H1 (cell line): ENCODE measurements at regions of chr2 and their contacts with region 1.

Region 1: DNA sequence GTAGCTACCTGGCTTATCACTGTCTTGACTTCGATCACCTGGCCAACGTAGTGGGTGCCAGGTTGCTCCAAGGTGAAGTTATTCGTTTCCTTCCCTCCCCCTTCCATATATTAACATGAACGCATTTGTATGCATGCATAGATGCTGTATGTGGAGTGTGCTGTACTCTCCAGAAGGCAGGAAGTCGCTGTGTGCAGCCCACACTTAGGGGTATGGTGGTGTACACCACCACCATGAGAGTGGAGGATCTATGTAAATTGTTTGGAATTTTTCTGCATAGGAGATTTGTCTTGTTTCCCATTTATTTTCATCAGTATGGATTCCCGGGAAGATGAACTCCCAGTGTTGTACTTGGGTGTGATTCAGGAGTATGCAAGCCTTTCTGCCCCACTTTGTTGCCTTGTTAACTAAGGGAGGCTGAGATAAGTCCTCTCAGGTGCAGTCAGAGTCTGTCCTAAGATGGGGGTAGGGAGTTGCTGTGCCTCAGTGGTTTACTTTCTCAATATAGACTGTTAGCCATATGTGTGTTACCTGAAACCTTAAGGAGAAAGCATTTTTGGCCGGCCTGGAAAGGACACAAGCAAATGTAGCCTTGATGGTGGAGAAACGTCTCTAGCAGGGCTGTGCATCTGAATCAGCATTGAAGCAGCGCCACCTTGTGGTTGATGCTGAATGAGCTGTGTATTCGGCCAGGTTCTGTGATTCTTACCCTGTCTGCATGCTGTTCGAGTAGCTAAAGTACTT is 149.8 kb downstream of the TANC1 start:
- DNase-seq: peak; percentile 59 to 93
- H3K4me3 ChIP-seq: no peak overlapping the region
- H3K27ac ChIP-seq: no peak overlapping the region
- H3K4me1 ChIP-seq: no peaks in the 10 kb centered on the region
- H3K27me3 ChIP-seq: no peaks in the 10 kb centered on the region
- CTCF ChIP-seq: peak; percentile 84 to 97 (median 92)
- EP300 ChIP-seq: no peak
- POLR2A ChIP-seq: no peak
- RAD21 ChIP-seq: peak; percentile 96 to 97

Region 2: DNA sequence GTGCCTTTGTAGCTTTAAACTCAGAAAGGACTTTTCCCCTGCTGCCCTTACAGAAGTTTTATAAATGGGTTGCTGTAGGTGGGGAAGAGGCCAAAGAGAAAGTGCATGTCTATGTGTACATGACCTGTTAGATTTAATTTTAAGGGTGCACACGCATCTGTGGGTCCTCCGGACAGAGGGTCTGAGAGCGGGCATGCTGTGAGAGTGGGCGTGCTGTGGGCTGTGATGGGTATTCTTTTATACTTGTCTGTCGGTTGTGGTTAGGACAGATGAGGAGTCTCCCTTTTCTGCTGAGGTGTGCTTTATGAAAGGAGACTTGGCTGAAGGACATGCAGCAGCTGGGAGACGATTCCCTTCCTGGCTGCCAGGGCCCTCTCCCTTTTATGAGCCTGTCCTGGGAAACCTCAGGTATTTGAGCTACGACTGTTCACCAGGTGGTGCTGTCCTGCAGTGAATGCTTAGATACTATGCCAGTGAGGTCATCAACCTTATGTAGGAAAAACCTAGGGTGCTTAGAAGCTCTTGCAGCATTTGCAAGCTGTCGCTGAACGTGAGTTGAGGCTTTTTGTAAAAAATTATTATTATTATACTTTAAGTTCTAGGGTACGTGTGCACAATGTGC is 82.4 kb before region 1 on chr2:
- CTCF ChIA-PET with region 1: interaction called, 79 read pairs
- POLR2A ChIA-PET with region 1: no interaction called
- DNase-seq: peak in 1 of 2 experiments; percentile 58
- H3K4me3 ChIP-seq: no peak overlapping the region
- H3K27ac ChIP-seq: no peak overlapping the region
- H3K4me1 ChIP-seq: peaks cover 2 to 10% (median 5%) of the 10 kb centered on the region in 4 experiments
- H3K27me3 ChIP-seq: no peaks in the 10 kb centered on the region
- CTCF ChIP-seq: peak; percentile 39 to 81 (median 67)
- EP300 ChIP-seq: 0 out of 3 replicates have a peak, but pooled peaks of 1 of the 2 experiments have one; percentile 37
- POLR2A ChIP-seq: no peak
- RAD21 ChIP-seq: peak; percentile 84 to 91

Region 3: DNA sequence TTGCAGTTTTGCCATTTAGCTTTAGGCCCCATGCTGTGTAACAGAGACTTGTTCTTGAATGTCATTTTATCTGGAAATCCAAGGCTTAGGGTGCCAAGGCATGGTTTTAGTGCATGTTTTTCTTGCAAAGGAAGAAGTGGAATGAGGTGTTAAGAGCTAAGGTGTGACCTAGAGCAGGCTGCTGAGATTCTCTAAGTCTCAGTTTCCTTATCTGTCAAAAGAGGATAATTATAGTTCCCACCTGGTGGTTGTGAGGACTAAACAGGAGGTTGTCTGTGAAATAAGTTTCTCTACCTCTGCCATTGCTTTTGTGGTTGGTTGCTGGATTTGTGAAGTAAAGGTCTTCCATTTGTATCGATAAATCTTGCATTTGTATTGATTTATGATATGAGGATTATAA is 67.9 kb before region 1 on chr2:
- CTCF ChIA-PET with region 1: no interaction called
- POLR2A ChIA-PET with region 1: no interaction called
- DNase-seq: no peak
- H3K4me3 ChIP-seq: no peak overlapping the region
- H3K27ac ChIP-seq: no peak overlapping the region
- H3K4me1 ChIP-seq: peaks cover 0 to 7% (median 2%) of the 10 kb centered on the region in 4 experiments; a peak in 2 of 7 replicates
- H3K27me3 ChIP-seq: no peaks in the 10 kb centered on the region
- CTCF ChIP-seq: no peak
- EP300 ChIP-seq: no peak
- POLR2A ChIP-seq: no peak
- RAD21 ChIP-seq: no peak

Region 4: DNA sequence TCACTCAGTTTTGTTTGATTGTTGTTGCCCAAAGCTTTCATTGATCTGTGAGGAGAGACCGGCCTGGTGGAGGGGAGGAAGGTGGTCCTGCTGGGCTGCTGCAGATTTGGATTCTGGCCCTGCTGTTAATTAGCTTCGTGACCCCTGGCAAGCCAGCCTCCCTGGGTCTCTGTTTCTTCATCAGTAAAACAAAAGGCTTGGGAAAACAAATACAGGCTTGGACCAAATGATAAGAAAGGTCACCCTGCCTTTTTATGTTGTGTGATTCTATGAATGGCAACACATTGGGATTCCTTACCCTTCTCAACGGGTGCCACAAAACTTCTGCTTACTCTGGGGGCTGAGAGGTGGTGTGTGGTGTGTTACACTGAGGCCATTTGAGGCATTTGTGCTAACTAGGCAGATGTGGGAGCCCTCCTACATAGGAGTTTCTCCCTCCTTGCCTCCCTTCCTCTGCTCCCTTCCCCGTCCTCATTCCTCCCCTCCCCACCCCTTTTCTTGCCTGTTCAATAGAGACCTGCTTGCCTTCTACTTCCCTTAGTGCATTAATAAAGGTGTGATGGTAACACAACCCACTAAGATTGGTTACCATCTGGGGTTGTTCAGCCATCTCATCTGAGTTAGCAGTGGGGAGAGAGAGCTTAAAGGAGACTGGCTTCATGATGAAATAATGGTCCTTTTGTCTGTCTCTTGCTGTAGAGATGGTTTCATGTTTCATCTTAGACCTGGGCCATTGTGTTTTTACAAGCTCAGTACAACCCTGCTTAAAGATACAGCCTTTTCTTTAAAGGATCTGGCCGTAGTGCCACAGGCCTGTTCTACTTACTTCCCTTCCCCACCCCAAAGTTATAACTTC is 53.6 kb before region 1 on chr2:
- CTCF ChIA-PET with region 1: interaction called, 17 read pairs
- POLR2A ChIA-PET with region 1: no interaction called
- DNase-seq: no peak
- H3K4me3 ChIP-seq: peak overlapping the region in 3 of 4 experiments; percentile 5 to 34 (median 12); a peak in 3 of 8 replicates
- H3K27ac ChIP-seq: no peak overlapping the region
- H3K4me1 ChIP-seq: peaks cover 8 to 13% (median 11%) of the 10 kb centered on the region in 4 experiments; a peak in 6 of 7 replicates
- H3K27me3 ChIP-seq: no peaks in the 10 kb centered on the region; a peak in 2 of 7 replicates
- CTCF ChIP-seq: no peak
- EP300 ChIP-seq: no peak
- POLR2A ChIP-seq: no peak
- RAD21 ChIP-seq: no peak

Region 5: GRCh38 chr2:159090514-159091201 is 27.6 kb before region 1 on chr2:
- CTCF ChIA-PET with region 1: interaction called, 16 read pairs
- POLR2A ChIA-PET with region 1: no interaction called
- DNase-seq: no peak
- H3K4me3 ChIP-seq: no peak overlapping the region
- H3K27ac ChIP-seq: no peak overlapping the region
- H3K4me1 ChIP-seq: peaks cover 0 to 6% (median 0%) of the 10 kb centered on the region in 4 experiments; a peak in 1 of 7 replicates
- H3K27me3 ChIP-seq: no peaks in the 10 kb centered on the region
- CTCF ChIP-seq: no peak
- EP300 ChIP-seq: no peak
- POLR2A ChIP-seq: no peak
- RAD21 ChIP-seq: no peak

Region 6: DNA sequence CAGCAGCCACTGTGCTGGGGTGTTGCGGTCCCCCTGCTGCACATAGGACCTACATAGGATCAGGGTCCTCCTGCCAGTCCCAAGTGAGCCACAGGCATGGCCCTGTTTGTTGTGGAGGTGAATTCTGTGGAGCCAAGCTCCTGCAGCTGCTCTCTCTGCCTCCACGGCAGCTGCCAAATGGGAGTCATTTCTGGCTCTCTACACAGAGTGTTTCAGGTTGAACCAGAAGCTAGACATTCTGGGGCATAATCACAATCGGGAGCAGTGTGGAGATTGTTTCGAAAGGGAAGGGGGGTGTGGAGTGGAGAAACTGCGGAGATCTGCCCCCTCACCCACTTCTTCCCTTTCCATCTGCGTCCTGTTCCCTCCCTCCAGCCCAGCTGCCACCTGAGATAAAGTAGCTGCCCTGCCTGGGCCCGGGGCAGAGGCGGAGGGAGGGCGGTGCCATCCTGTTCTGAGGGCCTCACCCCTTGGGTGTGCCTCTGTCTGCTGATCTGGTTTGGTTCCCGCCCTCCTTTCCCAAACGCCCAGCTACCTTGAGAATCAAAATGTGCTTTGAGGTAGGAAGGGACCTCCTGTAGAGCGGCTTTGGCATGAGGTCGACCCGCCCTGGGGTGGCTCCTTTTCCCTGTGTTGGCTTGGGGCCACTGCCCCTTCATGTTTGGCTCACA is 28.8 kb after region 1 on chr2:
- CTCF ChIA-PET with region 1: interaction called, 28 read pairs
- POLR2A ChIA-PET with region 1: no interaction called
- DNase-seq: no peak
- H3K4me3 ChIP-seq: no peak overlapping the region
- H3K27ac ChIP-seq: no peak overlapping the region
- H3K4me1 ChIP-seq: peaks cover 0 to 8% (median 2%) of the 10 kb centered on the region in 4 experiments; a peak in 3 of 7 replicates
- H3K27me3 ChIP-seq: no peaks in the 10 kb centered on the region
- CTCF ChIP-seq: no peak
- EP300 ChIP-seq: no peak
- POLR2A ChIP-seq: no peak
- RAD21 ChIP-seq: no peak

Region 7: GRCh38 chr2:159168707-159169106 is 50.4 kb after region 1 on chr2:
- CTCF ChIA-PET with region 1: interaction called, 10 read pairs
- POLR2A ChIA-PET with region 1: no interaction called
- DNase-seq: no peak
- H3K4me3 ChIP-seq: no peak overlapping the region
- H3K27ac ChIP-seq: no peak overlapping the region
- H3K4me1 ChIP-seq: no peaks in the 10 kb centered on the region
- H3K27me3 ChIP-seq: no peaks in the 10 kb centered on the region
- CTCF ChIP-seq: peak in 1 of 3 experiments; percentile 16; a peak in 1 of 4 replicates
- EP300 ChIP-seq: no peak
- POLR2A ChIP-seq: no peak
- RAD21 ChIP-seq: peak; percentile 22 to 34; a peak in 2 of 4 replicates

Region 8: GRCh38 chr2:159183147-159183745 is 65.0 kb after region 1 on chr2:
- CTCF ChIA-PET with region 1: interaction called, 18 read pairs
- POLR2A ChIA-PET with region 1: no interaction called
- DNase-seq: no peak
- H3K4me3 ChIP-seq: no peak overlapping the region
- H3K27ac ChIP-seq: no peak overlapping the region
- H3K4me1 ChIP-seq: no peaks in the 10 kb centered on the region
- H3K27me3 ChIP-seq: no peaks in the 10 kb centered on the region
- CTCF ChIP-seq: no peak
- EP300 ChIP-seq: no peak
- POLR2A ChIP-seq: no peak
- RAD21 ChIP-seq: no peak